ENCODE measurements at regions of chr3 and their contacts with region 1.

Region 1: DNA sequence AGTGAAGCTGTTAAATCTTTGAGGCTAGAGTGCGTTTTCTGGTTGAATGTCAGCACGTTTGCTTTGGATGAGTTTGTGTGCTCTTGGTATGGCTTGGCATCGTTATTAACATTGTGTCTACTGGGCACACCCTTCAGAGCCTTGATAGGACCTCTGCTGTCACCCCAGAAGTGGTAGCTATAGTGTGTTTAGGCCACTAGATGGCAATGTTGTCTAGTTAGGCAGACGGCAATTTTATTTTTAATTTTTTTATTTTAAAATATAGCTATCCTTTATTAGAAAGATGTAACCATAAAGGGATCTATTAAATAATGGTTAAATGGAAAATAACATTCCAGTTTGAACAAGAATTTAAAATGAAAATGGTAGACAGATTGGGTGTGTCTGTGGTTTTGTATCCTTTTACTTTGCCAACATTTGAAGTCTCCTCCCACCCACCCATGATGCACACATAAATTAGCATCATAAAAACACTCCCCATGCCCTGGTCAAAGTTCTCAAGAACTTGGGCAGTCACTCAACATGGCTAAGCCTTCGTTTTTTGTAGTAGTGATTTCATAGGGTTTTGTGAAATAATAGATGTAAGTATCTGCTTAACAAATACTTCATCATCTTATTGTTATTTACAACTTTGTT is 200.7 kb downstream of the KCNH8 start:
- DNase-seq: peak; percentile 22
- H3K4me3 Mint-ChIP-seq: no peak overlapping the region
- H3K27ac Mint-ChIP-seq: no peak overlapping the region
- H3K4me1 Mint-ChIP-seq: no peaks in the 10 kb centered on the region
- H3K27me3 Mint-ChIP-seq: peaks cover 6% of the 10 kb centered on the region

Region 2: GRCh38 chr3:19543212-19543841 is 194.3 kb after region 1 on chr3:
- CTCF ChIA-PET with region 1: interaction called, 4 read pairs
- intact Hi-C with region 1: loop called (anchors 1 kb)
- DNase-seq: no peak
- H3K4me3 Mint-ChIP-seq: no peak overlapping the region
- H3K27ac Mint-ChIP-seq: no peak overlapping the region
- H3K4me1 Mint-ChIP-seq: no peaks in the 10 kb centered on the region
- H3K27me3 Mint-ChIP-seq: no peaks in the 10 kb centered on the region